Activated T-helper 2 cell treated with anti-CD3 and anti-CD28 coated beads, Interferon-gamma antibody, Interleukin-2, Interleukin-4, amounts not matched to agents 10 μg/mL and 5 μg/mL and 100 μg/mL, durations not matched to agents 14 hours and 24 hours and 36 hours (primary cell): ENCODE measurements at regions of chr11 and their contacts with region 1.

Region 1: GRCh38 chr11:13868710-13869397 is 93.7 kb upstream of the SPON1 start:
- DNase-seq: peak; percentile 22
- H3K4me3 Mint-ChIP-seq: peak overlapping the region; percentile 31
- H3K27ac Mint-ChIP-seq: peak overlapping the region; percentile 86
- H3K4me1 Mint-ChIP-seq: peaks cover 34% of the 10 kb centered on the region
- H3K27me3 Mint-ChIP-seq: peaks cover 10% of the 10 kb centered on the region

Region 2: GRCh38 chr11:13939952-13940610 is 71.2 kb after region 1 on chr11:
- intact Hi-C with region 1: loop called (anchors 2 kb)
- DNase-seq: no peak
- H3K4me3 Mint-ChIP-seq: peak overlapping the region; percentile 19
- H3K27ac Mint-ChIP-seq: no peak overlapping the region
- H3K4me1 Mint-ChIP-seq: peaks cover 26% of the 10 kb centered on the region
- H3K27me3 Mint-ChIP-seq: peaks cover 17% of the 10 kb centered on the region

Region 3: DNA sequence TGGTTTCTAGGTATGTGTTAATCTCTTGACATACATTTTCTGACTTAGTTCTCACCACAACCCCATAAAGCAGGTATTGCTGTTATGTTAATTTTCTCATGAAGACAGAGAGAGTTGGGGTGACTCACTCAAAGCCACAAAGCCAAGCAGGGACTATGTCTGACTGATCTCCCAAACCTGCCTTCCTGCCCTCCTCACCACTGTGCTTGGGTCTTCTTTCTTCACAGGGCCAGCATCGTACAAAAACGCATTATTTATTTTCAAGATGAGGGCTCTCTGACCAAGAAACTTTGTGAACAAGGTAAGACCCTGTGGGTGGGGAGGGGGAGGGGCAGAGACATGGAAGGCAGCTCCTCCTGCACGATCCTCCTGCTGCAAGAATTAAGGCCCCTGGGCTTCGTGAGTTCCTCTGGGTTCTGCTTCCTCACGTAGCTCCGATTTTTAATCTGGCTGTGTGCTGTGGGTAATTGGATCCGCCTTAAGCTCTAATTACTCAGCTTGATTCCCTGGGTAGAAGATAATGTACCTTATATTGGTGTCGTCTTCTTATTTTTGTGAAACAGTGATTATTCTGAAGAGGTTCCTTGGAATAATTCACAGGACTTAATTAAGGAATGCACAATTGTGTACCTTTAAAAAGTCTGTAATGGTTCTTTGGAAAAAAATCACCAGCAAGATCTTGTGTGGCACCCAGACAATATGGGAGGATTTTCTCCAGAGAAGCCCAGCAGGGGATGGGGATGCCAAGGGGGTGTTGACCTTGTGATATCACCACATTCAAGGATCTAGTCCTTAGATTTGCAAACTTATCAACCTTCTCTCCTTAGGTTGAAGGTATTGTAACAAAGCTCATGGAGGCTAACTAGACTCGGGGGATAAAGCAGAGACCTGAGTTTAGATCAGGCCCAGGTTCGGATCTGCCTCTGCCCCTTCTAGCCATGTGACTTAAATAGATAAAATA is 206.5 kb after region 1 on chr11:
- intact Hi-C with region 1: loop called (anchors 2 kb)
- DNase-seq: peak; percentile 57
- H3K4me3 Mint-ChIP-seq: no peak overlapping the region
- H3K27ac Mint-ChIP-seq: no peak overlapping the region
- H3K4me1 Mint-ChIP-seq: peaks cover 43% of the 10 kb centered on the region
- H3K27me3 Mint-ChIP-seq: peaks cover 20% of the 10 kb centered on the region